ENCODE measurements at regions of chr6 and their contacts with region 1.

Region 1: DNA sequence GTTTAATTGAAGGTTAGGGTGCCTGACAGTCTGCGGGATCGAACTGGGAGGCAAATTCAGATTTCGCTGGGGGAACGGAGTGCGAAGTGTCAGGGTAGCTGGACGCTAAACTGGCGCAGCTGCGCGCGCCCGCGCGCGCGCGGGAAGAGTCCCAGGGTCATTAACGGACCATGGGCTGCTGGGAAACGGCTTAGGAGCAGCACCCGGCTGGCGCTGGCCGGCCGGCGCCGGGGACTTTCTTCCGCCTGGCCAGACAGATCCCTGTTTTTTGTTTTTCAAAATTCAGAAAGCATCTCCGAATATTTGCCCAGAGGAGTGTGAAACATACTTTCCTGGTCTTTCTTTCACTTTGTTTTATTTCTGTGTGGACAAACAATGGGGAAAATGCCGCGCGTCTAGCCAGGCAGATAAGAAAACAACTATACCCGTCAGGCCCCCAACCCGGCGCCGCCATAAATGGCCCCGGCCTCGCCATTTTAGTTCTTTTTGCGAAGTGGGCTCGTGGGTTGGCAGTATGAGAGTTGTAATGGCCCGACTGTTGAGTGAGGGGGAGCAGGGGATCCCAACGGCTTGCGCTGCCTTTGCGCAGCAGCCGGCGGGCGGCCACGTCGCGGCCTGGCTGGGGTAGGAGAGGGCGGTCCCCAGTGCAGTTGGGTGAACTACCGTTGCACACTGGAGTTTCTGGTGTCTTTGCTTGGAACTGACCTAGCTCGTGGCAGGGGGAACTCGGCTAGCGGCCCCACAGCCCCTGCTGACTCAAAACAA is 7.1 kb downstream of the HSPA1B start:
- DNase-seq: peak; percentile 86
- CTCF ChIP-seq: no peak

Region 2: GRCh38 chr6:31453259-31453658 is 381.4 kb before region 1 on chr6:
- CTCF ChIA-PET with region 1: no interaction called
- POLR2A ChIA-PET with region 1: no interaction called
- DNase-seq: no peak
- CTCF ChIP-seq: no peak

Region 3: GRCh38 chr6:31717499-31718222 is 117.0 kb before region 1 on chr6:
- CTCF ChIA-PET with region 1: no interaction called
- POLR2A ChIA-PET with region 1: interaction called, 10 read pairs
- DNase-seq: no peak
- CTCF ChIP-seq: no peak

Region 4: DNA sequence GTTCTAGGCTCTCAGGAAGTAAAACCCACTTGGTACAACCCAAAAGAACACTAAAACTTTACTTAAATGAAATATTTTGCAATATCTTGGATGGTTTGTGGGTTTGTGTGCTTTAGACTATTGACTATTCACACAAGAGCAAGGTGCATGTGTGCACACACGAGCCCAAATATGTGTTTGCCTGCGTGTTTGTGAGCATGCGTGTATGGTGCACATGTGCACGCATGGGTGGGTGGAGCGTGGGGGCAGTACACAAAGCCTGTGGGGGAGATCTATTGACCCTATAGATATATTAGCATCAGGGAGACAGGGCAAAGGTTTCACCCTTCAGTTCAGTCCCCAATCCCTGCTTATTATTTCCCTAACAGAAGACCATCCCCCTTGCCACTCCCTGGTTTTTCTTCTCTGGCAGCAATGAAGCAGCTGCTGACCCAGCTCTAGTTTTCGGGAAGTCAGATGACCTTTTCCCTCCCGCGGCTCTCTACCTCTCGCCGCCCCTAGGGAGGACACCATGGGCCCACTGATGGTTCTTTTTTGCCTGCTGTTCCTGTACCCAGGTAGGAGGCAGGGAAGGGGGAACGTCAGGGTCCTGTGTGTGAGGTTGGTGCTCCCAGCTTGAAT is 92.7 kb after region 1 on chr6 and contains the start of gene C2:
- CTCF ChIA-PET with region 1: no interaction called
- POLR2A ChIA-PET with region 1: no interaction called
- DNase-seq: no peak
- CTCF ChIP-seq: no peak

Region 5: DNA sequence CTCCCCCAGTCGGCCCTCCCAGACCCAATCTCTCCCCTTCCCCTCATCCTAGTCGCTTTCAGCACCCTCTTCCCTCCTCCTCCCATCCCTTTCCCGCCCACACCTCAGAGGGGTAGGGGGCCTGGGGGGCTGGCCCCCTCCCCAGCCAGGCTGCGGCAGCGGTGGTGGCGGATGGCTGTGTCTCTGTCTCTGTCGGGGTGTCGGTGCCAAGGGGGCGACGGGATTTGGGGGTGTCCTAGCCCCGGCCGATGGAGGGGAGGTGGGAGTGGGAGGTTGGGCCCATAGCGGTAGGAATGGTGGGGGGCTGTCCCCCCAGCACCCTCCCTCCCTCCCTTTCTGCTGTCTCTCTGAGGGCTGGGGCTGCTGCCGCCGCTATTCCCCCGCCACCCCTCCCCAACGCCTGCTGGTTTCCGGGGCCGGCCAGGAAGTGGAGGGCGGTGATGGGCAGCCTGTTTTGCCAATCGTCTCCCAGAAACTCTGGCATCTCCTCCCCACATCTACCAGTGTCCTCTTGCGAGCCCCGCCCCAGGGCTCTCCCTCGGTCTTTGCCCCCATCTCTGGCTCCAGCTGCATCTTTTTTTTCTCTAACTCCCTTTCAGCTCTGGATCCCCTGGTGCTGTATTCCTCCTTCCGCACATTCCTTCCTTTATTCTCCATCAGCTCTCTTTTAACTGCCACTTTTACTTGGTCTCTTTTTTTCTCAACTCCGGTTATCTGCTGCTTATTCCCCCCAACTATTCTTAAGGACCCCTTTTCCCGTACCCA is 341.3 kb after region 1 on chr6 and contains the start of gene AGPAT1:
- CTCF ChIA-PET with region 1: no interaction called
- POLR2A ChIA-PET with region 1: no interaction called
- DNase-seq: peak; percentile 99
- CTCF ChIP-seq: no peak